GM12878 (cell line): ENCODE measurements at regions of chrX and their contacts with region 1.

Region 1: DNA sequence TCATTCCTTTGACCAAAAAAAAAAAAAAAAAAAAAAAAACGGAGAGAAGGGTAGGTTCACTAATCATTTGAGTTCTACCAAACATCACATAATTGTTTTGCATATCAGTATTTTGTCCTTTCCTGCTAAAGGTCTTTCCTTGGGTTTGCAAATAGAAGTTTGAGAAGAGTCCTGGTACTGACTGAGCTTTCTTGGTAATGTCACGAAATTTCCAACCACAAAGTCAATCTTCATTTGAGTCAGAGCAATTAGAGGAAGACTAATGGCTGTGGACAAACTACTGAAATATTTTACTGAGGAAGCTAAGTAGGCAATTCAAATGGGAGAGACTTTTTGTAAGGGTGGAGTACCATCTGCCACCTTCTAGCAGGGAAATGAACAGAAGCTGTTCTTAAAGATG is 21.7 kb upstream of the CD40LG start:
- DNase-seq: peak; percentile 36
- ATAC-seq: peak; percentile 82
- H3K4me3 ChIP-seq: no peak overlapping the region
- H3K27ac ChIP-seq: no peak overlapping the region
- H3K4me1 ChIP-seq: peaks cover 10% of the 10 kb centered on the region
- H3K27me3 ChIP-seq: no peaks in the 10 kb centered on the region
- CTCF ChIP-seq: no peak
- EP300 ChIP-seq: no peak
- POLR2A ChIP-seq: no peak
- RAD21 ChIP-seq: no peak

Region 2: DNA sequence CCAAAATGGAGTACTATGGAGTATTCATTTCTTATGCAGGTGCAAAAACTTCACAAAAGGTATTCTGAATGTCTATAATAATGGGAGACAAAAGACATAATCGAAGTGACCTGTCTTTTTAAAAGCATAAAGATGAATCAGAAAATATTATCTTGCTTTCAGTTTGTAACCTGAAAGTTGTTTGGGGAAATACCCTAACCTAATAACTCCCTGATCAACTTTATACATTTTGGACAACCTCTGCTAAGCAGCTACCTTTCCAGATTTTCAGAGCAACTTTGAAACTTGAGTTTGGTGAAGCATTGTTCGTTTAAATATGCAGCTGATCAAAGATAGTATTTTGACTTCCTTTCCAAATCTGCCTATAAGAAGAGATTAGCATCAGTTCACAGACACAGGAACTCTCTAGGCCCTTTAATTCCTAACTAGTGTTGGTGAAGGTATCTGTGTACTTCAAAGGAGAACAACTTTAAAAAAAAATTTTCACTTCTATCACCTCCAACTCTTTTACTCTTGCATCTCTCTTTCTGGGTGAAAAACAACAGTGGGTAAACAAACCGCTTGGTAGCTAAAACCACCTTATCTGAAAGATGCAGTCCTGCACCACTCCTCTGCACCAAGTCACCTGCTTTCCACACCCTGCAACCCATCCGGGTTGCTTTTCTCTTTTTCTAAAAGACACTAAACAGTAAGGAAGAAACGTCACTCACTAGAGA is 48.2 kb after region 1 on chrX:
- CTCF ChIA-PET with region 1: no interaction called
- POLR2A ChIA-PET with region 1: no interaction called
- RAD21 ChIA-PET with region 1: no interaction called
- SMC1A ChIA-PET with region 1: no interaction called
- in situ Hi-C with region 1: no loop called
- intact Hi-C with region 1: loop called (anchors 5 kb)
- DNase-seq: no peak
- ATAC-seq: peak; percentile 56
- H3K4me3 ChIP-seq: peak overlapping the region; percentile 14; the same call in 1 of the 2 replicates
- H3K27ac ChIP-seq: peak overlapping the region; percentile 60
- H3K4me1 ChIP-seq: peaks cover 43% of the 10 kb centered on the region
- H3K27me3 ChIP-seq: no peaks in the 10 kb centered on the region
- CTCF ChIP-seq: no peak
- EP300 ChIP-seq: no peak
- POLR2A ChIP-seq: no peak
- RAD21 ChIP-seq: no peak

Region 3: GRCh38 chrX:136711147-136711546 is 84.9 kb after region 1 on chrX:
- CTCF ChIA-PET with region 1: no interaction called
- POLR2A ChIA-PET with region 1: no interaction called
- RAD21 ChIA-PET with region 1: no interaction called
- SMC1A ChIA-PET with region 1: no interaction called
- in situ Hi-C with region 1: no loop called
- intact Hi-C with region 1: no loop called
- DNase-seq: no peak
- ATAC-seq: peak; percentile 58
- H3K4me3 ChIP-seq: no peak overlapping the region
- H3K27ac ChIP-seq: peak overlapping the region; percentile 74; the same call in 1 of the 2 replicates
- H3K4me1 ChIP-seq: peaks cover 11% of the 10 kb centered on the region
- H3K27me3 ChIP-seq: no peaks in the 10 kb centered on the region
- CTCF ChIP-seq: peak; percentile 29 to 54 (median 32); a peak in 4 of 6 replicates
- EP300 ChIP-seq: no peak
- POLR2A ChIP-seq: no peak
- RAD21 ChIP-seq: peak; percentile 77

Region 4: GRCh38 chrX:137166591-137166990 is 540.4 kb after region 1 on chrX:
- CTCF ChIA-PET with region 1: no interaction called
- POLR2A ChIA-PET with region 1: no interaction called
- RAD21 ChIA-PET with region 1: no interaction called
- SMC1A ChIA-PET with region 1: no interaction called
- in situ Hi-C with region 1: no loop called
- intact Hi-C with region 1: no loop called
- DNase-seq: no peak
- ATAC-seq: 0 out of 3 replicates have a peak, but pooled peaks have one; percentile 40
- H3K4me3 ChIP-seq: no peak overlapping the region
- H3K27ac ChIP-seq: no peak overlapping the region
- H3K4me1 ChIP-seq: no peaks in the 10 kb centered on the region
- H3K27me3 ChIP-seq: no peaks in the 10 kb centered on the region
- CTCF ChIP-seq: peak; percentile 28 to 59 (median 45); a peak in 5 of 6 replicates
- EP300 ChIP-seq: no peak
- POLR2A ChIP-seq: no peak
- RAD21 ChIP-seq: peak; percentile 28; the same call in 1 of the 2 replicates